Activated B cell treated with CpG ODN at 0.5 μM for 24 hours (primary cell): ENCODE measurements at regions of chr13 and their contacts with region 1.

Region 1: GRCh38 chr13:66689628-66690027 is 540.5 kb downstream of the PCDH9 start:
- DNase-seq: no peak
- ATAC-seq: peak; percentile 31
- H3K4me3 Mint-ChIP-seq: no peak overlapping the region
- H3K27ac Mint-ChIP-seq: no peak overlapping the region
- H3K4me1 Mint-ChIP-seq: peaks cover 13% of the 10 kb centered on the region
- H3K27me3 Mint-ChIP-seq: no peaks in the 10 kb centered on the region
- CTCF ChIP-seq: no peak

Region 2: DNA sequence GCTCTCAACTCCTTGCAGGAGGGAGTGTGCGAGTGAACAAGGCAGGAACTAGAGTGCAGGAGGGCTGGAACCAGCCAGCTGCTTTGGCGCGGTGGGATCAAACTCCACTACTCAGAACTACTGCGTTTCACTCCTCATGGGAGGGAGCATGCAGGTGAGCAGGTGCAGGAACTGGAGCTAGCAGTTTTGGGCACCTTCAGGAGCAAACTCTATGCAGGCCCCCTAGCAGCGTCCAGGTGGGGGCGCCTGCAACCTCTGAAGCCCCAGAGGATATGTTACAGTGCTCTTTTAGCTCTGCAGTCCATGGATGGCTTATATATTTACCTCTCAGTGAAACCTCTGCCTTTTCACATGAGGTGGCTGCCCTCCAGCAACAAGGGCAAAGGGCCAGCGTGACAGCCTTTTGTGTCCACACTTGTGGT is 762.9 kb before region 1 on chr13:
- CTCF ChIA-PET with region 1: no interaction called
- POLR2A ChIA-PET with region 1: no interaction called
- intact Hi-C with region 1: loop called (anchors 2 kb)
- DNase-seq: no peak
- ATAC-seq: no peak
- H3K4me3 Mint-ChIP-seq: no peak overlapping the region
- H3K27ac Mint-ChIP-seq: no peak overlapping the region
- H3K4me1 Mint-ChIP-seq: no peaks in the 10 kb centered on the region
- H3K27me3 Mint-ChIP-seq: no peaks in the 10 kb centered on the region
- CTCF ChIP-seq: no peak

Region 3: DNA sequence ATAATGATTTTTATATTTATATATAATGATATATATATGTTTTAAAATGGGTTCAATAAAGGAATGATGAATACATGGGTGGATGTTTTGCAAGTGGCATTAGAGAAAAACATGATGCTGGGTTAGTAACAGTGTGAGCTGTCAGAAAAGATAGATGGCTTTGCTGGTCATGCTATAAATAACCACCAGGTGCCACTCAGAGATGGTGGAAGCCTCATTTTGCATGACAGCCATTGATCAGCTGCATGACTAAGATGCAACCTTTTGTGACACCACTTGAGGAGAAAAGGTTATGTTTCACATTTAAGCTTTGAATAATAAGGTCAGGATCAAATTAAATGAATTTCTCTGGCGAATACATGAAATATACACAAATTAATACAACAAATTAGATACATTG is 197.1 kb before region 1 on chr13:
- CTCF ChIA-PET with region 1: interaction called, 4 read pairs
- POLR2A ChIA-PET with region 1: no interaction called
- intact Hi-C with region 1: loop called (anchors 1 kb)
- DNase-seq: no peak
- ATAC-seq: peak; percentile 56
- H3K4me3 Mint-ChIP-seq: no peak overlapping the region
- H3K27ac Mint-ChIP-seq: no peak overlapping the region
- H3K4me1 Mint-ChIP-seq: peaks cover 3% of the 10 kb centered on the region
- H3K27me3 Mint-ChIP-seq: no peaks in the 10 kb centered on the region
- CTCF ChIP-seq: no peak

Region 4: DNA sequence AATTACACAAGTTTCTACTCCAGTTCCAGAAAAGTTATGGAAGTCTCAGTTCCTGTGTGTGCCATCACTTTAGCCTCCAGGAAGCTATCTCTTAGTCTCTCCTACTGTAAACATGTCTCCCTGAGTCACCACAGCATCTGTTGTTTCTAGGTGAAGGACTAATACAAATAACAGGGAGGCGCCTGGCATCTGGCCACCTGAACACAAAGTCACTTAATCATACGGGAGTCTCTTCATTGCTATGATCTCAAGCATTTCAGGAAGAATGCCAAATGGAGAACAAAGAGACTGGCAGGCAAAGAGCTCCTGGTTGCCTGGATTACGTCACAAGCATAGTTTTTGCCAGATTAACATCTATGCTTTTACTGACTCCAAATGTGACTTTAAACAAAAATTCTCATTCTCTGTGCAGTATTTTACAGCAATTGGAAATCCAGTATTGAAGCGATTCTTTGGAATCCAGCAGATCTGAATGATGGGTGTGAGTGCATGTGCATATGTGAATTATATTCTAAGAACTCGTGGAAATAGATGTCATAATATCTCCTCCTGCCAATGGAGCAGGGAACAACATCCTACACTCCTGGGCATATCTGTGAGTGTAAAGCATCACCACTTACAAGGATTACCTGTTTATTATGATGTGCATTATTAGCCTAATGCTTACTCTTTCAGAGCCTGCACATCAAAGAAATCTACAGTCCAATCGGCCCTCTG is 32.3 kb before region 1 on chr13:
- CTCF ChIA-PET with region 1: interaction called, 4 read pairs
- POLR2A ChIA-PET with region 1: interaction called, 4 read pairs
- intact Hi-C with region 1: loop called (anchors 1 kb)
- DNase-seq: no peak
- ATAC-seq: no peak
- H3K4me3 Mint-ChIP-seq: peak overlapping the region; percentile 28
- H3K27ac Mint-ChIP-seq: peak overlapping the region; percentile 79
- H3K4me1 Mint-ChIP-seq: peaks cover 56% of the 10 kb centered on the region
- H3K27me3 Mint-ChIP-seq: no peaks in the 10 kb centered on the region
- CTCF ChIP-seq: no peak

Region 5: GRCh38 chr13:67224148-67224846 is 534.7 kb after region 1 on chr13:
- CTCF ChIA-PET with region 1: interaction called, 26 read pairs
- POLR2A ChIA-PET with region 1: no interaction called
- intact Hi-C with region 1: loop called (anchors 1 kb)
- DNase-seq: peak; percentile 42
- ATAC-seq: peak; percentile 78
- H3K4me3 Mint-ChIP-seq: peak overlapping the region; percentile 57
- H3K27ac Mint-ChIP-seq: peak overlapping the region; percentile 64
- H3K4me1 Mint-ChIP-seq: peaks cover 36% of the 10 kb centered on the region
- H3K27me3 Mint-ChIP-seq: no peaks in the 10 kb centered on the region
- CTCF ChIP-seq: no peak